Activated CD4-positive, alpha-beta memory T cell treated with anti-CD3 and anti-CD28 coated beads, Interleukin-2, amount 10 ng/mL, durations not matched to agents 7 days and 5 days (primary cell): ENCODE measurements at regions of chr19 and their contacts with region 1.

Region 1: GRCh38 chr19:12806239-12807081 is at the start of gene RNASEH2A:
- DNase-seq: peak; percentile 92
- H3K4me3 Mint-ChIP-seq: peak within 1 kb of the TSS; percentile 95
- H3K27ac Mint-ChIP-seq: peak within 1 kb of the TSS; percentile 83
- H3K4me1 Mint-ChIP-seq: peaks cover 32% of the 10 kb centered on the region
- H3K27me3 Mint-ChIP-seq: no peaks in the 10 kb centered on the region
- total RNA-seq, gene RNASEH2A: 34.8 to 38.4 TPM

Region 2: GRCh38 chr19:12777217-12778016 is 29.0 kb before region 1 on chr19:
- CTCF ChIA-PET with region 1: interaction called, 183 read pairs
- POLR2A ChIA-PET with region 1: interaction called, 574 read pairs
- DNase-seq: peak; percentile 85
- H3K4me3 Mint-ChIP-seq: peak overlapping the region; percentile 83
- H3K27ac Mint-ChIP-seq: peak overlapping the region; percentile 92
- H3K4me1 Mint-ChIP-seq: peaks cover 44% of the 10 kb centered on the region
- H3K27me3 Mint-ChIP-seq: no peaks in the 10 kb centered on the region

Region 3: GRCh38 chr19:12821761-12822160 is 15.3 kb after region 1 on chr19:
- CTCF ChIA-PET with region 1: no interaction called
- POLR2A ChIA-PET with region 1: no interaction called
- DNase-seq: no peak
- H3K4me3 Mint-ChIP-seq: no peak overlapping the region
- H3K27ac Mint-ChIP-seq: no peak overlapping the region
- H3K4me1 Mint-ChIP-seq: peaks cover 9% of the 10 kb centered on the region
- H3K27me3 Mint-ChIP-seq: peaks cover 11% of the 10 kb centered on the region

Region 4: DNA sequence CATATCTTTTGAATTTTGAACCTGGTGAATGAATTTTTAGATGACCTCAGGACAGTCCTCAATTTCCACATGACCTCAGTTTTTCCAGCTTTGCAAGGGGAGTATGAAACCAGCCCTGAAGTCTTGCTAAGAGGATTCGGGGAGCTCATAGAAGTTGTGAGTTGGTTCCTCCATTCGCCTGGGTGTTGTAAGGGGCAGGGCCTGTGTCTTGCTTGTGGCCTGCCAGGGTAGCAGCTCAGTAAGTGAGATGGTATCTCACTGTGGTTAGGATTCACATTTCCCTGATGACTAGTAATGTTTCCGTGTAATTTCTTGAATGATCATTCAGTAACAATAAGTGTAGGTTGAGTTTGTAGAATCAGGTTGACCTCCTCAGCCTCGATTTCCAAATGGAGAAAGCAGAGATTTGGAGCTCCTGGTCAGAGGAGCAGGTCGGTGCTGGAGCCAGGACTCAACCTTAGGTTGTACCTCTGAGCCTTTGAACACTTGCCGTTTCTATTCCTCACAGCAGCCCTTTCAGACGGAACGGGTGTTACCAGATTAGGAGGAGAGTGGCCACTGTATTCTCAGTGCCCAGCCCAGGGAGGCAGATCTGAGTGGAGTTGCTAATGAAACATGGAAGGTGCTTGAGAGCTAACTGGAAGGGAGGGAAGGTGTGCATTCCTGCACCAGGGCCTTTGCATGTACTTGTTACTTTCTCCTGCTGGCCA is 326.2 kb after region 1 on chr19:
- CTCF ChIA-PET with region 1: no interaction called
- POLR2A ChIA-PET with region 1: no interaction called
- DNase-seq: peak; percentile 78
- H3K4me3 Mint-ChIP-seq: peak overlapping the region; percentile 61
- H3K27ac Mint-ChIP-seq: peak overlapping the region; percentile 91
- H3K4me1 Mint-ChIP-seq: peaks cover 45% of the 10 kb centered on the region
- H3K27me3 Mint-ChIP-seq: no peaks in the 10 kb centered on the region